H1 (cell line): ENCODE measurements at regions of chr1 and their contacts with region 1.

Region 1: GRCh38 chr1:208019257-208019656 is 108.3 kb upstream of the CD34 start:
- DNase-seq: no peak
- H3K4me3 ChIP-seq: no peak overlapping the region
- H3K27ac ChIP-seq: no peak overlapping the region
- H3K4me1 ChIP-seq: 0 out of 7 replicates have a peak, but pooled peaks cover 0 to 2% (median 0%) of the 10 kb centered on the region in 4 experiments
- H3K27me3 ChIP-seq: no peaks in the 10 kb centered on the region
- CTCF ChIP-seq: no peak
- EP300 ChIP-seq: no peak
- POLR2A ChIP-seq: no peak
- RAD21 ChIP-seq: no peak

Region 2: DNA sequence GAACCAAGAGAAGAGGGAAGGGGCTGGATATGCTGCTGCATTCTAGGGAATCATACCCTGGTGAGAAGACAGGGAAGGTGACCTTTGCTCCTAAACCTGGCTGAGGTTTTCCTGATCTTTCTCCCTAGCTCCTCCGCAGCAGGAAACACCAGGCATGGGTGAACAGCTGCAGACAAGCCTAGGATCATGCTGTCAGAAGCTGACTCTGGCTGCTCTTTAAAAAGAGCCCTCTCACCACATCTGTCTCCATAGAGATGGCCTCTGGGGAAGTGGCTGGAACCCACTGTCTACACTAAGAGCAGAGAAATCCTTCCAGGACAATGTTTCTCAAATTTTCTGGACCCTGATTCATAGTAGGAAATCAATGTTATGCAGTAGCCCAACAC is 165.9 kb before region 1 on chr1:
- CTCF ChIA-PET with region 1: no interaction called
- POLR2A ChIA-PET with region 1: no interaction called
- DNase-seq: no peak
- H3K4me3 ChIP-seq: no peak overlapping the region
- H3K27ac ChIP-seq: no peak overlapping the region
- H3K4me1 ChIP-seq: peaks cover 0 to 3% (median 0%) of the 10 kb centered on the region in 4 experiments; a peak in 1 of 7 replicates
- H3K27me3 ChIP-seq: no peaks in the 10 kb centered on the region
- CTCF ChIP-seq: no peak
- EP300 ChIP-seq: no peak
- POLR2A ChIP-seq: no peak
- RAD21 ChIP-seq: no peak

Region 3: DNA sequence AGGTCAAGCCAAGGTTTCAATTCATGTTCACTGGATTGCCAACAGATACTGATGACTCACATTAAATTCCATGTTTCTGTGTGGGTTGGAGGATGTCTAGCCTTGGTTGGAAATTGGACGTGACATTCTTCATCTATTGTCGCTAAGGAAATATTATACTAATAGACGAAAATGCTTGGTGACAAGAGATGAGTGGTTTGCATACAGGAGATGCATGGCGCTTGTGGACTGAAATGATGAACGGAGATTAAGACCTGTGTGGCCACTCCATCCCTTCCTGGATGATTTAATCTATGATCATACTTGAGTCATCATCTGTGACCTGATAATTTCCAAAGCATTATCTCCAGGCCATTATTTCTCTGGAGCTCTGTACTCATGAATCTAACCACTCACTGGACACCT is 11.3 kb before region 1 on chr1:
- CTCF ChIA-PET with region 1: interaction called, 26 read pairs
- POLR2A ChIA-PET with region 1: no interaction called
- DNase-seq: no peak
- H3K4me3 ChIP-seq: no peak overlapping the region
- H3K27ac ChIP-seq: no peak overlapping the region
- H3K4me1 ChIP-seq: no peaks in the 10 kb centered on the region
- H3K27me3 ChIP-seq: no peaks in the 10 kb centered on the region; a peak in 1 of 7 replicates
- CTCF ChIP-seq: no peak
- EP300 ChIP-seq: no peak
- POLR2A ChIP-seq: no peak
- RAD21 ChIP-seq: no peak

Region 4: GRCh38 chr1:208251911-208252835 is 232.9 kb after region 1 on chr1:
- CTCF ChIA-PET with region 1: interaction called, 15 read pairs
- POLR2A ChIA-PET with region 1: no interaction called
- DNase-seq: peak in 1 of 2 experiments; percentile 84
- H3K4me3 ChIP-seq: peak overlapping the region in 1 of 4 experiments; percentile 22; a peak in 1 of 8 replicates
- H3K27ac ChIP-seq: no peak overlapping the region
- H3K4me1 ChIP-seq: peaks cover 0 to 7% (median under 1%) of the 10 kb centered on the region in 4 experiments; a peak in 5 of 7 replicates
- H3K27me3 ChIP-seq: peaks cover 3 to 15% (median 13%) of the 10 kb centered on the region in 4 experiments; a peak in 6 of 7 replicates
- CTCF ChIP-seq: peak; percentile 63 to 72 (median 69)
- EP300 ChIP-seq: no peak
- POLR2A ChIP-seq: no peak
- RAD21 ChIP-seq: peak; percentile 66 to 82